ENCODE measurements at regions of chr19 and their contacts with region 1.

Region 1: GRCh38 chr19:12757544-12758274 is 6.1 kb downstream of the BEST2 start:
- DNase-seq: peak; percentile 85
- CTCF ChIP-seq: peak; percentile 82

Region 2: GRCh38 chr19:12544401-12544876 is 213.3 kb before region 1 on chr19:
- CTCF ChIA-PET with region 1: no interaction called
- POLR2A ChIA-PET with region 1: no interaction called
- DNase-seq: no peak
- CTCF ChIP-seq: no peak

Region 3: DNA sequence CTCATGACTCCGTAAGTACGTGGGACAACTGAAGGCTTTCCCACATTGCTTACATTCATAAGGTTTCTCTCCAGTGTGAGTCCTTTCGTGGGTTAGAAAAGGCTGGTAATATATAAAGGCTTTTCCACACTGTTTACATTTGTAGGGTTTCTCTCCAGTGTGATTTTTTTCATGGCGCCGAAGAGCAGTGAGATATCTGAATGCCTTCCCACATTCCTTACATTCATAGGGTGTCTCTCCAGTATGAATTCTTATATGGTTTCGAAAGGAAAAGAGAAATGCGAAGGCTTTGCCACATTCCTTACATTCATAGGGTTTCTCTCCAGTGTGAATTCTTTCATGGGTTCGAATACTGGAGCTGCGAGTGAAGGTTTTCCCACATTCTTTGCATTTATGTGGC is 176.6 kb before region 1 on chr19:
- CTCF ChIA-PET with region 1: no interaction called
- POLR2A ChIA-PET with region 1: no interaction called
- DNase-seq: no peak
- CTCF ChIP-seq: no peak

Region 4: GRCh38 chr19:12716861-12717260 is 40.8 kb before region 1 on chr19:
- CTCF ChIA-PET with region 1: interaction called, 16 read pairs
- POLR2A ChIA-PET with region 1: no interaction called
- DNase-seq: no peak
- CTCF ChIP-seq: peak; percentile 38

Region 5: GRCh38 chr19:12736995-12737834 is 20.5 kb before region 1 on chr19 and contains the start of gene GET3:
- CTCF ChIA-PET with region 1: interaction called, 412 read pairs
- POLR2A ChIA-PET with region 1: no interaction called
- DNase-seq: peak; percentile 91
- CTCF ChIP-seq: no peak

Region 6: DNA sequence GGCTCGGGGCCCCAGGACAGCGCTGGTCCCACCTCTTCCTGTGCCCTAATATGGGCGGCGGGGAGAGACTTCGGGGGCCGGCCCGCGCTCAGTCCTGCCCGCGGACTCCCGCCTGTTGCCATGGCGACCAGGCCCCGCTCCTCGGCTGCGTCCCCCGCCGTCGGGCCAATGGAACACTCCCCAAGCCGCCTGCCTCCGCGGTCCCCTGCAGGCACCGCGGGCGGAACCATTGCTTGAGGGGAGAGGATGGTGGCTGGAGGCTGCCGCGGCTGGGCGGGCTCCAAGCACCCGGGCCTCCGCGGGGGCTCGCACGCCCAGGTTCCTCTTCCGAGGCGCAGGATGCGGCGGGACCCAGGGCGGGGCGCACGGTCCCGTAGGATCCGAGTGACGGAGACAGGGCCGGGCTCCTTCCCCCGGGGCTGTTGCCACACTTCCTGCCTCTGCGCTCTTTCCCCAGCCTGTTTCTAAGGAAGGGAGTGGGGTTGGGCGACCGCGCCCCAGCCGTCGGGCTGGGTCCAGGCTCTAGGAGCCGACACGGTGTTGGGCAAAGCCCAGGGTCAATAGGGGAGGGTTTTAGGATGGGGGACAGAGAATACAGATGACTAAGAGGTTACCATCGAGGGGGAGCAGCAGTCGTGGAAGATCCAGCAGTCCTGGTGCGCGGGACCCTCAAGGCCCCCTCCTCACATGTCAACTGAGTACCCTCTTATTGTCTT is 32.4 kb after region 1 on chr19:
- CTCF ChIA-PET with region 1: interaction called, 550 read pairs
- POLR2A ChIA-PET with region 1: interaction called, 10 read pairs
- DNase-seq: peak; percentile 94
- CTCF ChIP-seq: no peak

Region 7: DNA sequence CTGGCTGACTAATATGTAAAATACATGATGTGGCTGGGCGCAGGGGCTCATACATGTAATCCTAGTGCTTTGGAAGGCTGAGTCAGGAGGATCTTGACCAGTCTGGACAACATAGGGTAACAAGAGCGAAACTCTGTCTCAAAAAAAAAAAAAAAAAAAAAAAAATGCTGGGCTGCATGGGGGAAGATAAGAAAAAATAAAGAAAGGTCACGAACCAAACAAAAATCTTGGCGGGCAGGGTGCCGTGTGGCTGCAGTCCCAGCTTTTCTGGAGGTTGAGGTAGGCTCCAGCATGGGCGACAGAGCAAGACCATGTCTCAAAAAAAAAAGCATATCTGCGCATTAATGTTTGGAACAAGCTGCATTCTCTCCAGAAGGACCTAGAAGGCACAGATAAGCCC is 57.4 kb after region 1 on chr19:
- CTCF ChIA-PET with region 1: interaction called, 12 read pairs
- POLR2A ChIA-PET with region 1: no interaction called
- DNase-seq: no peak
- CTCF ChIP-seq: no peak

Region 8: DNA sequence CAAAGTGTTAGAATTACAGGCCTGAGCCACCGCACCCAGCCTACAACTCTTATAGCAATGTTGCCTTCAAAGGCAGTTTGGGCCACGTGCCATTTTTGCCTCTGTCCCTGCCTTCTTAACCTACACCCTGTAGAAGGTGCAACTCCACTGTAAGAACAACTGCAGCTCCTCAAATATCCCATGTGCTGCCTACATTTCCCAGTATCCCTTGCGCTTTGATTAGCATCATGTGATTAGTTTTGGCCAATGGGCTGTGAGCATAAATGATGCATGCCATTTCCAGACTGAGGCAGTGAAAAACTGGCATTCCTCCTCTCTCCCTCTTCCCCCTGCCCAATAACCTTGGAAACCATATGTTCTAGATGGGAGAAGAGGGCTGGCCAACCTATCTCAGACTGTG is 931.4 kb after region 1 on chr19:
- CTCF ChIA-PET with region 1: no interaction called
- POLR2A ChIA-PET with region 1: no interaction called
- DNase-seq: no peak
- CTCF ChIP-seq: no peak

Measured in GM10248 (cell line).